Activated CD4-positive, alpha-beta memory T cell treated with anti-CD3 and anti-CD28 coated beads, Interleukin-2, amount 10 ng/mL, durations not matched to agents 7 days and 5 days (primary cell): ENCODE measurements at regions of chr12 and their contacts with region 1.

Region 1: DNA sequence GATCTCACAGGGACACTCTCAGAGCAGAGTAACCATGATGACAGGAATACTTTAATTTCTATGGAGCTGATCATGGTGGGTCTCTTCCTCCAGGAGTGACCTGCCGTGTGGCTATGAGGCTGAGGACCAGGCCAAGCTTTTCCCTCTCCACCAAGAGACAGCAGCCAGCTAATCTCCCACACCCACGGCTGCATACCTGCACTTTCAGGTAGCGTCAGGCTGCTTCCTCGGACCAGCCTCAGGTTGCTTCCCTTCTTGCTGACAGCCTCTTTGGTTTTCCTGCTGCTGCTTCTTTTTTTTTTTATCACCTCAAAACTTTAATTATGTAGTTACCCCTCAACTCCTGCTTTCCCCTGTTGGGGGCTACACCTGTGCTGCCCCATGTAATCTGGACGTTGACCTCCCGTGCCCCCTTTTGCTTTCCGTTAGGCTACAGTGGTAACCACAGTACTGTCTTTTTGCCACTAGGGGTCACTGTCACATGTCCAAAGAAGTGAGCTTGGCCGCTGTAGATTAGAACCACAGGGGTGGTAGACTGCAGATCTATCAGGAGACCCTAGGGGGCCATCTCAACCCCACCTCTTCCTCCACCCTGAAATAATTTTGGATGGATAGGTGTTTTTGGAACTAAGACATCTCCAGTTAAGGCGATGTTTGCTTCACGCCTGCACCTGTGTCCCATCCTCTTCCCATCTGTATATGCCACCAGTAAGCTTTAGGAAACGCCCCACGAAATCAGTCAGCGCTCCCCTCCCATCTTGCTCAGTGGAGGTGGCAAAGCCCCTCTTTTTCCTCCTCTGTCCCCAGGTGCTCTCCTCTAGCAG is 7.8 kb upstream of the PIP4K2C start:
- DNase-seq: peak; percentile 72
- H3K4me3 Mint-ChIP-seq: no peak overlapping the region
- H3K27ac Mint-ChIP-seq: no peak overlapping the region
- H3K4me1 Mint-ChIP-seq: peaks cover 5% of the 10 kb centered on the region
- H3K27me3 Mint-ChIP-seq: peaks cover 1% of the 10 kb centered on the region

Region 2: GRCh38 chr12:57563358-57563757 is 19.9 kb before region 1 on chr12:
- CTCF ChIA-PET with region 1: interaction called, 12 read pairs
- POLR2A ChIA-PET with region 1: no interaction called
- DNase-seq: no peak
- H3K4me3 Mint-ChIP-seq: no peak overlapping the region
- H3K27ac Mint-ChIP-seq: no peak overlapping the region
- H3K4me1 Mint-ChIP-seq: peaks cover 2% of the 10 kb centered on the region
- H3K27me3 Mint-ChIP-seq: peaks cover 10% of the 10 kb centered on the region

Region 3: GRCh38 chr12:57614178-57614947 is 31.1 kb after region 1 on chr12:
- CTCF ChIA-PET with region 1: interaction called, 77 read pairs
- POLR2A ChIA-PET with region 1: no interaction called
- DNase-seq: no peak
- H3K4me3 Mint-ChIP-seq: no peak overlapping the region
- H3K27ac Mint-ChIP-seq: no peak overlapping the region
- H3K4me1 Mint-ChIP-seq: peaks cover 10% of the 10 kb centered on the region
- H3K27me3 Mint-ChIP-seq: peaks cover 71% of the 10 kb centered on the region

Region 4: DNA sequence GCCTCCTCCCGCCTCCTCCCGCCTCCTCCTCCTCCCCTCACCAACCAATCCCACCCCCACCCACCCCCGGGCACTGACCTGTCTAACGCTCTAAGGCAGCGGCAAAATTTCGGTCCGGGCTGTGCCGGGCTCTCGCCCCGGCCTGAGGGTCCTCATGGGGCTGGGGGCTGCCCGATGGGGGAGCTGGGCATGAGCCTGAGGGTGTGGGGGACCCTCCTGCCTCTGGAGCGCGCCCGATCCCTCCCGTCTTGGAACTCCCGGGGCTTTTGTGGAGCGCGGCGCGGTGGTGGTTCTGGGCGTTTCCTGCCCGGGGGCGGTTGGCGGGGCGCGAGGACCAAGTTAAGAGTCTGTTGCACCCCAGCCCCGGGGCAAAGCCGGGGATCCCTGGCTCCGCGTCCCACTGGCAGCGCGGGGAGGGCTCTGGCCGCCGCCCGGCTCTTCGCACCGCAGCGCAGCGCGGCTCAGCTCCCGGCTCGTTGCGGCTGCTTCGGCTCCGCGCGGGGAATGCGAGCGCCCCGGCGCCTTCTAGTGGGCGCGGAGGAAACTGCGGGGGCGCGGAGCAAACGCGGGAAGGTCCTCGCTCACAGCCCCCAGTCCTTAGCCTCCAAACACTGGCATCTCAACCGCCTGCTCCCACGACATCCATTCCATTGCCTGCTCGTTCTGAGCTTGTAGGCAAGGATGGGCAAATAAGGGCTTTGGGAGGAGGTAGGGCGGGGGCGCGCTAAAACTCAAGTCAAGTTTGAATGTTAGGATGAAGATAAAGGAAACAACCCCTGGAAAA is 49.7 kb after region 1 on chr12 and contains the start of gene B4GALNT1:
- CTCF ChIA-PET with region 1: interaction called, 47 read pairs
- POLR2A ChIA-PET with region 1: no interaction called
- DNase-seq: peak; percentile 71
- H3K4me3 Mint-ChIP-seq: peak within 1 kb of the TSS; percentile 63
- H3K27ac Mint-ChIP-seq: no peak within 1 kb of the TSS
- H3K4me1 Mint-ChIP-seq: peaks cover 14% of the 10 kb centered on the region
- H3K27me3 Mint-ChIP-seq: peaks cover 57% of the 10 kb centered on the region
- total RNA-seq, gene B4GALNT1: 1.4 to 1.8 TPM

Region 5: DNA sequence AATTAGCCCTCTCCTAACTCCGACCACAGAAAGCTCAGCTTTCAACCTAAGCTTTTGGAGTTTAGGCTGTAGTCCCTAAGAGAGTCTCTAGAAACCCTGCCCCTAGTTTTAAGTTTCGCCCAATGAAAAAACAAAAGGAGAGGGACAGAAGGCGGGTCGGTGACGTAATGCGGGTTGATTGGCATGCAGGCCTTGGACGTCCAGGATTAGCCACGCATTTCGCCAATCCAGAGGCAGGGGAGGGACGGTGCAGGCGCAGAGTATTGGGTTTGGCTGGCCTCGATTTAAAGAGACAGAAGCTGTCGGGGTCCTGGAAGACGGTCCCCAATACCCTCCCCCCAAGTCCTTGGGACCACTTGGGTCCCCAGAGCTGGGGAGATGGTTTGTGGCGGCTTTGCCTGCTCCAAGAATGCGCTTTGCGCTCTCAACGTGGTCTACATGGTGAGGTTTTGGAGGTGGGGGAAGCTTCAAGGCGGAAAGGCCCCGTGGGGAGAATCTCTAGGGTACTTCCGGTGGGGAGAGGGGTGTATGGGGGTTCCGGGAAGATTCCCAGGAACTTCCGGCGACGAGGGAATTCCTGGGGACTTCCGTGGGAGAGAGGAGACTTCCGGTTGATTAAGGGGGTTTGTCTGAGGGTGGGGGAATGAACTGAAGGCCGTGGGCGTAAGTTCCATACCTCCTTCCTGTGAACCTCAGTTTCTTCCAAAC is 161.7 kb after region 1 on chr12 and contains the start of gene TSPAN31:
- CTCF ChIA-PET with region 1: interaction called, 12 read pairs
- POLR2A ChIA-PET with region 1: interaction called, 4 read pairs
- DNase-seq: peak; percentile 97
- H3K4me3 Mint-ChIP-seq: peak within 1 kb of the TSS; percentile 77
- H3K27ac Mint-ChIP-seq: peak within 1 kb of the TSS; percentile 93
- H3K4me1 Mint-ChIP-seq: peaks cover 53% of the 10 kb centered on the region
- H3K27me3 Mint-ChIP-seq: no peaks in the 10 kb centered on the region
- total RNA-seq, gene TSPAN31: 21.8 to 23.0 TPM